H1 (cell line): ENCODE measurements at regions of chr7 and their contacts with region 1.

Region 1: GRCh38 chr7:23273141-23273599 is 26.0 kb upstream of the MALSU1 start:
- DNase-seq: peak; percentile 77 to 97
- H3K4me3 ChIP-seq: peak overlapping the region in 2 of 4 experiments; percentile 2 to 31; a peak in 3 of 8 replicates
- H3K27ac ChIP-seq: no peak overlapping the region
- H3K4me1 ChIP-seq: peaks cover 0 to 3% (median 0%) of the 10 kb centered on the region in 4 experiments; a peak in 2 of 7 replicates
- H3K27me3 ChIP-seq: no peaks in the 10 kb centered on the region
- CTCF ChIP-seq: peak; percentile 89 to 97 (median 93)
- EP300 ChIP-seq: no peak
- POLR2A ChIP-seq: no peak
- RAD21 ChIP-seq: peak; percentile 87

Region 2: DNA sequence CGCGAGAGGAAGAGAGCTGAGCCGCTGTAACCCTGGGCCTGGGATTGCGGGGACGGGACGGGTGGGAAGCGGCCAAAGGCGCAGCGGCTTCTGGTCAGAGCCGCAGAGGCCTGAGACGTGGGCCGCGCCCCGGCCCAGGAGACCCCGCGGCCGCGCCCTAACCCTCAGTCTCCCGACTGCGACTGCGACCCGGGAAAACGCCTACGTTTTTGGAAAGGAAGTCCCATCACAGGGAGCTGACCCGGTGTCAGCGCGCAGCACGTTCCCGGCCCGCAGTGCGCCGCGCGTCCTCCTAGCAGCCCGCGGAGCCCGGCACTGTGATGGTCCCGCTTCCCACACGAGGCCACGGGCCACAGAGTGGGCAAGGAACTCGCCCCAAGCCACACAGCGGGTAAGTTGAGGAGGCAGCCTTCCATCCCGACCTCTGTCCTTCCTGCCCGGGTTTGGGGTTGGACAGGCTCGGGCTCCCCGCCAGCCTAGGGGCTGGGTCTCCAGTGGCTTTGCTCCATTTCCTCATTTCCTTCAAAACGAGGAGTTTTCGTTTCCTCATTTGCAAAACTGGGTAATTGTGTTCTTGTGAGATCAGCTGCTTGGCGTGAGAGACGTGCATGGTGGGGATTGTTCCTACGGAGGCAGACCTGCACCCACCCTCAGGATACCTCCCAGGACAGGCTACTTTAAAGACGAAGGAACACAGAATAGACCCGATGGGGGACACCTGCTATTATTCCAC is 25.4 kb before region 1 on chr7:
- CTCF ChIA-PET with region 1: interaction called, 241 read pairs
- POLR2A ChIA-PET with region 1: interaction called, 5 read pairs
- DNase-seq: peak in 1 of 2 experiments; percentile 67
- H3K4me3 ChIP-seq: peak overlapping the region; percentile 34 to 55 (median 46)
- H3K27ac ChIP-seq: no peak overlapping the region
- H3K4me1 ChIP-seq: peaks cover 1 to 9% (median 7%) of the 10 kb centered on the region in 4 experiments; a peak in 6 of 7 replicates
- H3K27me3 ChIP-seq: peaks cover 0 to 20% (median 15%) of the 10 kb centered on the region in 4 experiments; a peak in 6 of 7 replicates
- CTCF ChIP-seq: no peak
- EP300 ChIP-seq: no peak
- POLR2A ChIP-seq: no peak
- RAD21 ChIP-seq: no peak

Region 3: DNA sequence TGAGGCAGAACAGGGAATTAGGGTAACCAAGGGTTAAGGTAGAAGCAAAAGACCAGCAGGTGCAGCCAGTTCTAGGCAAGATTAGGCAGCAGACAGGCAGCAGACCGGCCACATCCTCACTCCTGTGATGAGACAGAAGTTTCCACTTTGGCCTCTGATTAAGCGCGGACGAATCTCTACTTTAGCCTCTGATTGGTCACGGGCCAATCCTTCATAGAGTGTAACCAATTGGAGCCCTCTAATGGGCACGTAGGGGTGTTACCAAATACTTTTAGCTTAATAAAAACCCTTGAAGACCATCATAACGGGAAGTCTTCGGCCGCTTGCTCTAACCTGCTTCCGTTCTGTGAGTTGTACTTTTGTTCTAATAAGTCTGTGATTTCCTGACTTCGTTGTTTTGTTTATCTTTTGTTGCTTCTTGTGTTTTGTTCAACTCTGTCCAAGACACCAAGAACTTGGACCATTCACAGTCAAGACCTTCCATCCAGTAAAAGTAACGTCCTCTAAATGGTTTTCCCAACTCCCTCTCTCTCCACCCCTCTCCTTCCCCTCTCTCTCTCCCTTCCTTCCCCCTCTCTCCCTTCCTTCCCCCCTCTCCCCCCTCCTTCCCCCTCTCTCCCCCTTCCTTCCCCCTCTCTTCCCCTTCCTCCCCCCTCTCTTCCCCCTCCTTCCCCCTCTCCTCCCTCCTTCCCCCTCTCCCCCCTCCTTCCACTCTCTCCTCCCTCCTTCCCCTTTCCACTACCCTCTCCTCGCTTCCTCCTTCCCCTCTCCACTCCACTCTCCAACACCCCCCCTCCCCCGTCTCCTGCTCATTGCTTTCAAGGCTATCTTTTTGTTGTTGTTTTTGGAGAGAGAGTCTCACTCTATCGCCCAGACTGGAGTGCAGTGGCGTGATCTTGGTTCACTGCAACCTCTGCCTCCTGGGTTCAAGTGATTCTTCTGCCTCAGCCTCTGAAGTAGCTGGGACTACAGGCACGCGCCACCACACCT is 12.8 kb after region 1 on chr7:
- CTCF ChIA-PET with region 1: interaction called, 241 read pairs
- POLR2A ChIA-PET with region 1: interaction called, 3 read pairs
- DNase-seq: no peak
- H3K4me3 ChIP-seq: no peak overlapping the region
- H3K27ac ChIP-seq: no peak overlapping the region
- H3K4me1 ChIP-seq: no peaks in the 10 kb centered on the region
- H3K27me3 ChIP-seq: no peaks in the 10 kb centered on the region
- CTCF ChIP-seq: no peak
- EP300 ChIP-seq: no peak
- POLR2A ChIP-seq: no peak
- RAD21 ChIP-seq: no peak

Region 4: GRCh38 chr7:23298885-23299769 is 26.0 kb after region 1 on chr7 and contains the start of gene MALSU1:
- CTCF ChIA-PET with region 1: interaction called, 27 read pairs
- POLR2A ChIA-PET with region 1: interaction called, 4 read pairs
- DNase-seq: peak; percentile 75 to 97
- H3K4me3 ChIP-seq: peak within 1 kb of the TSS; percentile 85 to 98 (median 94)
- H3K27ac ChIP-seq: peak within 1 kb of the TSS; percentile 61; the same call in 1 of the 2 replicates
- H3K4me1 ChIP-seq: peaks cover 0 to 4% (median 2%) of the 10 kb centered on the region in 4 experiments; a peak in 3 of 7 replicates
- H3K27me3 ChIP-seq: no peaks in the 10 kb centered on the region; a peak in 1 of 7 replicates
- CTCF ChIP-seq: no peak
- EP300 ChIP-seq: 0 out of 3 replicates have a peak, but pooled peaks of 1 of the 2 experiments have one; percentile 37
- POLR2A ChIP-seq: peak; percentile 89 to 96
- RAD21 ChIP-seq: no peak
- total RNA-seq, gene MALSU1: 84.0 and 86.8 TPM in 2 replicates

Region 5: GRCh38 chr7:23430893-23431259 is 157.7 kb after region 1 on chr7:
- CTCF ChIA-PET with region 1: no interaction called
- POLR2A ChIA-PET with region 1: no interaction called
- DNase-seq: no peak
- H3K4me3 ChIP-seq: no peak overlapping the region
- H3K27ac ChIP-seq: no peak overlapping the region
- H3K4me1 ChIP-seq: peaks cover 0 to 14% (median 8%) of the 10 kb centered on the region in 4 experiments; a peak in 4 of 7 replicates
- H3K27me3 ChIP-seq: no peaks in the 10 kb centered on the region
- CTCF ChIP-seq: no peak
- EP300 ChIP-seq: no peak
- POLR2A ChIP-seq: no peak
- RAD21 ChIP-seq: no peak

Region 6: GRCh38 chr7:23539494-23539907 is 266.3 kb after region 1 on chr7:
- CTCF ChIA-PET with region 1: interaction called, 13 read pairs
- POLR2A ChIA-PET with region 1: no interaction called
- DNase-seq: no peak
- H3K4me3 ChIP-seq: no peak overlapping the region
- H3K27ac ChIP-seq: no peak overlapping the region
- H3K4me1 ChIP-seq: no peaks in the 10 kb centered on the region
- H3K27me3 ChIP-seq: no peaks in the 10 kb centered on the region
- CTCF ChIP-seq: no peak
- EP300 ChIP-seq: no peak
- POLR2A ChIP-seq: no peak
- RAD21 ChIP-seq: no peak